K562 (cell line): ENCODE measurements at regions of chr5 and their contacts with region 1.

Region 1: DNA sequence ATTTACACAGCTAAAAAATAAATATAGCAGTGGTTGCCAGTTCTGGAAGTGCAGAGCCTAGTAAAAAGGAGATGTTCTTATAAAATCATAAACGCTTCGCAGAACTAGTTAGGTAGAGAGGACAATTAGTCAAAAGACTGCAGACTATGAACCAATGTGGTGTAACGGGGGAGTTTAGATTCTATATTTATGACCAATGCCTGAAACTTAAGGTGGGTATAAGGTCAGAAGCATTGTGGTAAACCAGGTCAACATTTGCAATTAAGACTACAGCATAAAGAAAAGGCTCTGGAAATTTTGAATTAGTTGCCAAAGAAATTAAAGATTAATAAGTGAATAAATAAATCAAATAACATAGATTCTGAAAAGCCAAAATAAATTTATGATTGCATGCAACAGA is 370.4 kb downstream of the PRDM9 start:
- DNase-seq: no peak
- ATAC-seq: no peak
- H3K4me3 ChIP-seq: no peak overlapping the region
- H3K27ac ChIP-seq: no peak overlapping the region
- H3K4me1 ChIP-seq: no peaks in the 10 kb centered on the region
- H3K27me3 ChIP-seq: no peaks in the 10 kb centered on the region
- CTCF ChIP-seq: no peak
- EP300 ChIP-seq: no peak
- POLR2A ChIP-seq: no peak
- RAD21 ChIP-seq: no peak

Region 2: GRCh38 chr5:23893561-23893960 is 15.7 kb after region 1 on chr5:
- CTCF ChIA-PET with region 1: no interaction called
- POLR2A ChIA-PET with region 1: no interaction called
- in situ Hi-C with region 1: no loop called
- intact Hi-C with region 1: loop called (anchors 1 kb)
- DNase-seq: no peak
- ATAC-seq: no peak
- H3K4me3 ChIP-seq: no peak overlapping the region
- H3K27ac ChIP-seq: no peak overlapping the region
- H3K4me1 ChIP-seq: no peaks in the 10 kb centered on the region
- H3K27me3 ChIP-seq: no peaks in the 10 kb centered on the region
- CTCF ChIP-seq: no peak
- EP300 ChIP-seq: no peak
- POLR2A ChIP-seq: no peak
- RAD21 ChIP-seq: no peak